HepG2 (cell line): ENCODE measurements at regions of chr17 and their contacts with region 1.

Region 1: DNA sequence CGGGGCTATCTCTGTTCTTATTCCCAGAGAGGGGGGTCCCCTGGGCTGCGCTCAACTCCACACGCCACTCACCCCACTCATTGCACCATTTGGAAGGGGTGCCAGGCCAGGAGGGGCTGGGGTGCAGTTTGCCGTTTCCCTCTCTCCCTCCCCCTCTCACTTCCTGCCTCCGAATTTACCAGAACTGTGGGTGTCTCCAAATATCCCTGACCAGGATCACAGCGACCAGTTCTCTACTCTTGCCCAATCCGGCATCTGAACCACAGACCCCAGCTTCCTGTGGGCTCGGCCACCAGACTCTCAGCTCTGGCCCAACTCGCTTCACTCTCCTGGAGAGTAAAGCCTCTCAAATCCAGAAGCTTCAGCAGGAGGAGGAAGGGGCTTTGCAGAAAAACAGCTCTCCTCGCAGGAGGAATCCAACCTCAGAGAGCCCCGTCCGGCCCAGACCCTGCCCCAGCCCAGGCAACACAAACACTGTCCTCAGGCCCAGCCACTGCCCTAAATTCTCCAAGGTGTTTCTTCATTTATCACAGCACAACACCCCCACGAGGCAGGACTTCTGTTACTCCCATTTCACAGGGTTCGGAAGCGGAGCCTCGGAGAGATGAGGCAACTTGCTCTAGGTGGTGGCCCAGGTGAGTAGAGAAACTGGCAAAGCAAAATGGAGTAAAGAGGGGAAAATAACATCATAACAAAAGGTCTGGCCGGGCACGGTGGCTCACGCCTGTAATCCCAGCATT is 423 bp upstream of the ASGR2 start:
- DNase-seq: peak; percentile 91
- ATAC-seq: peak; percentile 77
- H3K4me3 ChIP-seq: peak overlapping the region; percentile 86 to 99 (median 88)
- H3K27ac ChIP-seq: peak overlapping the region; percentile 98
- H3K4me1 ChIP-seq: peaks cover 87% of the 10 kb centered on the region
- H3K27me3 ChIP-seq: peaks cover 0 to 5% of the 10 kb centered on the region in 2 experiments; a peak in 1 of 5 replicates
- CTCF ChIP-seq: no peak
- EP300 ChIP-seq: no peak
- POLR2A ChIP-seq: peak; percentile 40 to 52; a peak in 3 of 4 replicates
- RAD21 ChIP-seq: 0 out of 2 replicates have a peak, but pooled peaks have one; percentile 3

Region 2: GRCh38 chr17:7035591-7036368 is 79.3 kb before region 1 on chr17 and contains the start of gene SLC16A13:
- CTCF ChIA-PET with region 1: no interaction called
- POLR2A ChIA-PET with region 1: interaction called, 23 read pairs
- in situ Hi-C with region 1: no loop called
- intact Hi-C with region 1: no loop called
- DNase-seq: peak; percentile 97
- ATAC-seq: peak; percentile 81
- H3K4me3 ChIP-seq: peak within 1 kb of the TSS; percentile 75 to 97 (median 94)
- H3K27ac ChIP-seq: peak within 1 kb of the TSS; percentile 90
- H3K4me1 ChIP-seq: peaks cover 41% of the 10 kb centered on the region
- H3K27me3 ChIP-seq: no peaks in the 10 kb centered on the region; a peak in 2 of 5 replicates
- CTCF ChIP-seq: no peak; the same call in 1 of the 2 replicates
- EP300 ChIP-seq: no peak
- POLR2A ChIP-seq: peak; percentile 78 to 93
- RAD21 ChIP-seq: no peak
- total RNA-seq, gene SLC16A13: 1.9 and 3.0 TPM in 2 replicates

Region 3: DNA sequence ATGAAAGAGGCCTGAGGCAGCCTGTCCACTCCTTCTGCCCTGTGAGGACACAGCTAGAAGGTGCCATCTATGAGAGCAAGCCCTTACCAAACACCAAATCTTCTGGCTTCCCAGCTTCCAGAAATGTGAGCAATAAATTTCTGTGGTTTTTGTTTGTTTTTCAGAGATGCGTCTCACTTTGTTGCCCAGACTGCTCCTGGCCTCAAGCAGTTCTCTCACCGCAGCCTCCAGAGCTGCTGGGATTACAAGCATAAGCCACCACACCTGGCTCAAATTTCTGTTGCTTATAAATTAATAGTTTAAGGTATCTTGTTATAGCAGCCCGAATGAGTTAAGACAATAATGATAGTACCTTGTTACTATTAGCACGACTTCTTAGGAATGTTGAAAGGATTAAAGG is 58.7 kb before region 1 on chr17:
- CTCF ChIA-PET with region 1: no interaction called
- POLR2A ChIA-PET with region 1: interaction called, 19 read pairs
- in situ Hi-C with region 1: no loop called
- intact Hi-C with region 1: loop called (anchors 5 kb)
- DNase-seq: no peak
- ATAC-seq: no peak
- H3K4me3 ChIP-seq: no peak overlapping the region
- H3K27ac ChIP-seq: no peak overlapping the region
- H3K4me1 ChIP-seq: peaks cover 27% of the 10 kb centered on the region
- H3K27me3 ChIP-seq: no peaks in the 10 kb centered on the region; a peak in 2 of 5 replicates
- CTCF ChIP-seq: no peak
- EP300 ChIP-seq: no peak
- POLR2A ChIP-seq: no peak
- RAD21 ChIP-seq: no peak

Region 4: DNA sequence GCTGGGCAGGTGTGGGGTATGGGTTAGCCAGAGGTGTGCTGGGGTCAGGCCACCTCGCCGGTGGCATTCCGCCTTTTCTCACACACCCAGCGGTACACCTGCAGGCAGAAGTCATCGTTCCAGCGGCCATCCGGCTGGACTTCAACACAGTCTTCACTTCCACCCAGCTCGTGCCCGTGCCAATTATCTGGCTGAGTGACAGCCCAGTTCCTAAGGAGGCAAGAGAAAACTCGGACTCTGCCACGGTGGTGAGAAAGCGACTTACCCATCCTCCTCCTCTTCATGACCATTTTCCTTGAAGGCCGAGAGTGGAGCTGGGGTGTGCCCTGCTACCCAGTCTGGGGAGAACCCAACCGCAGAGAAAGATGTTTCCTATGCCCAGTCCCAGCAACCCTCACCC is 13.5 kb before region 1 on chr17:
- CTCF ChIA-PET with region 1: no interaction called
- POLR2A ChIA-PET with region 1: interaction called, 59 read pairs
- in situ Hi-C with region 1: no loop called
- intact Hi-C with region 1: no loop called
- DNase-seq: no peak
- ATAC-seq: peak; percentile 21; the same call in 2 of the 3 replicates
- H3K4me3 ChIP-seq: no peak overlapping the region
- H3K27ac ChIP-seq: no peak overlapping the region
- H3K4me1 ChIP-seq: no peaks in the 10 kb centered on the region
- H3K27me3 ChIP-seq: no peaks in the 10 kb centered on the region
- CTCF ChIP-seq: no peak
- EP300 ChIP-seq: no peak
- POLR2A ChIP-seq: no peak
- RAD21 ChIP-seq: no peak

Region 5: DNA sequence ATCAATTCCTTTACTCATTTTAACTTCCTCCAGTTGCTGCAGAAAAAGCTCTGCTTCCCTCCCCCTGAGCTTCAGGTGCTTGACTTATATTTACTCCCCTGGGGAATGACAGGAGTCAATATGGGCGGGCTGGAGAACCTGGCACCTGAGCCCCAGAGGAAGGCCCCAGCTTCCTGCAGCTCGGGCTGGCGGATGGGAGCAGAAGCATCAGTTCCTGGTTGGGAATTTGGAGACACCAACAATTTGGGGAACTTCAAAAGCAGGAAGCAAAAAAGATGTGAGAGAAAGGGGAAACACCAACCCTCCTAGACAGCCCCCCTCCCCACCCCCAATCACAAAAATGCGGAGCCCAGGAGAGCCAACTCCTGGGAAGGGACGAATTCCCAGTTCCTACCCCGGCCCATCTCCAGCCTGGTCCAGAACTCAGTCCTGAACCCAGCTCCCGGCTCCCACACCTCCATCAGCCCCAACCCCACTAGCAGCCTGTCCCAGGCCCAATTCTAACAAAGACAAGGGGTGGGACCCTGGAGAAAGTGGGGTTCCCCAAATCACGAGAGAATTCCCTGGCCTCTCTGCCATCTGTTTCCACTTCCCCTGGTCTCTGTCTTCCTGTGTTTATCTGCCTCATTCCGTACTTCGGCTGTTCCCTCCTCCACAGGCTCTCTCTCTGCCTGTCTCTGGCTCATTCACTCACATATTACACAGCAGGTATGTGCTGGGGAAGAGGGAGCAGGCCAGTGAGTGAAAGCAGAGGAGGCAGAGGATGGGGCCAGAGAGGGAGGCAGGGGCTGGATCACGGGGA is 15.8 kb after region 1 on chr17:
- CTCF ChIA-PET with region 1: interaction called, 5 read pairs
- POLR2A ChIA-PET with region 1: interaction called, 77 read pairs
- in situ Hi-C with region 1: no loop called
- intact Hi-C with region 1: loop called (anchors 2 kb)
- DNase-seq: no peak
- ATAC-seq: peak; percentile 52
- H3K4me3 ChIP-seq: peak overlapping the region in 1 of 3 experiments; percentile 34; a peak in 1 of 6 replicates
- H3K27ac ChIP-seq: peak overlapping the region; percentile 22
- H3K4me1 ChIP-seq: peaks cover 49% of the 10 kb centered on the region
- H3K27me3 ChIP-seq: no peaks in the 10 kb centered on the region
- CTCF ChIP-seq: no peak
- EP300 ChIP-seq: no peak
- POLR2A ChIP-seq: no peak
- RAD21 ChIP-seq: no peak

Region 6: GRCh38 chr17:7136266-7136877 is 21.3 kb after region 1 on chr17:
- CTCF ChIA-PET with region 1: interaction called, 5 read pairs
- POLR2A ChIA-PET with region 1: interaction called, 77 read pairs
- in situ Hi-C with region 1: no loop called
- intact Hi-C with region 1: loop called (anchors 2 kb)
- DNase-seq: peak; percentile 63
- ATAC-seq: no peak
- H3K4me3 ChIP-seq: peak overlapping the region; percentile 24 to 50 (median 30)
- H3K27ac ChIP-seq: peak overlapping the region; percentile 66
- H3K4me1 ChIP-seq: peaks cover 70% of the 10 kb centered on the region
- H3K27me3 ChIP-seq: no peaks in the 10 kb centered on the region
- CTCF ChIP-seq: peak; percentile 81
- EP300 ChIP-seq: no peak
- POLR2A ChIP-seq: no peak
- RAD21 ChIP-seq: peak; percentile 89

Region 7: DNA sequence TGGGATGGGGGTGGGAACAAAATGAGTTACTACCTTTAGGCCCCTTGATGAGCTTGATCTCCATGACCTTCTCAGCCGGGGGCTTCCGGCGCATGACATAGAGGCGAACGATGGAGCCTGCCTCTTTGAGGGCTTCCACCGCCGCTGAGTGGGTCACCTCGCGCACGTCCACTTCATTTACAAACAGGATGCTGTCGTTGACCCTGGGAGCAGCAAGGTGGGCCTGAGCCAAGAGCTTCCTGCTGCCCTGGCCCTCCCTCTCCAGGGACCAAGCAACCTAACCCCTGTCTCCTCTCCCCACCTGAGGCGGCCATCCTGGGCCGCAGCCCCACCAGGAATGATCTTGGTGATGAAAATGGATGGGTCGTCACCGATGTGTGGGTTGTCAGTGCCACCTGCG is 88.3 kb after region 1 on chr17:
- CTCF ChIA-PET with region 1: no interaction called
- POLR2A ChIA-PET with region 1: no interaction called
- in situ Hi-C with region 1: no loop called
- intact Hi-C with region 1: no loop called
- DNase-seq: no peak
- ATAC-seq: no peak
- H3K4me3 ChIP-seq: no peak overlapping the region
- H3K27ac ChIP-seq: no peak overlapping the region
- H3K4me1 ChIP-seq: no peaks in the 10 kb centered on the region
- H3K27me3 ChIP-seq: 0 out of 5 replicates have a peak, but pooled peaks cover 0 to 5% of the 10 kb centered on the region in 2 experiments
- CTCF ChIP-seq: no peak
- EP300 ChIP-seq: no peak
- POLR2A ChIP-seq: no peak
- RAD21 ChIP-seq: no peak